ENCODE measurements at regions of chr1 and their contacts with region 1.

Region 1: DNA sequence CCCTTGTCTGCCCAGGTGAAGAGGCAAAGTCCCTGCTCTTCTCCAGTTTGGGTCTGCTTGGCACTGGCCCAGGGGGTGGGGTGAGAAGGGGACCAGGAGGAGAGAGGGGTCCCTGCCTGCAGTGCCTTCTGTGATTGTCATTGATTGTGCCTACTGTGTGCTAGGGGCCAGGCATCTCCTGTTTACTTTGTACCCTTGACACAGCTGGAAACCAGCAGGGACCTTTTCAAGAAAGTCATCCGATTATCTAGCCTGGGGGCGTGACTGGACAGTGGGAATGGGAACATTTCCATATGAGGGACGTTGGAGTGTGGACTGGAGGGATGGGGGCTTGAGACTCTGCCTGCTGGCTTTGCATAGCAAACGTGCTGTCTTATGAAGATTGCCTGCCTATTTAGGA is 19.8 kb upstream of the DMBX1 start:
- DNase-seq: no peak
- H3K4me3 ChIP-seq: no peak overlapping the region
- H3K27ac ChIP-seq: no peak overlapping the region
- H3K4me1 ChIP-seq: peaks cover 0 to 5% of the 10 kb centered on the region in 2 donors
- H3K27me3 ChIP-seq: peaks cover 0 to 24% of the 10 kb centered on the region in 2 donors
- CTCF ChIP-seq: no peak
- POLR2A ChIP-seq: no peak

Region 2: GRCh38 chr1:46446646-46447498 is 23.0 kb before region 1 on chr1:
- intact Hi-C with region 1: loop called (anchors 1 kb)
- DNase-seq: peak; percentile 67 to 82
- H3K4me3 ChIP-seq: no peak overlapping the region
- H3K27ac ChIP-seq: no peak overlapping the region
- H3K4me1 ChIP-seq: no peaks in the 10 kb centered on the region
- H3K27me3 ChIP-seq: peaks cover 0 to 18% of the 10 kb centered on the region in 2 donors
- CTCF ChIP-seq: peak; percentile 32 to 77 (median 68)
- POLR2A ChIP-seq: no peak